Cardiac septum (tissue), 1 donor: ENCODE measurements at regions of chr20 and their contacts with region 1.

Region 1: GRCh38 chr20:49384437-49385088 is 97.9 kb downstream of the KCNB1 start:
- DNase-seq: peak; percentile 85

Region 2: GRCh38 chr20:49484180-49485140 is 99.9 kb after region 1 on chr20:
- intact Hi-C with region 1: loop called (anchors 1 kb)
- DNase-seq: no peak

Region 3: GRCh38 chr20:49508435-49509199 is 124.1 kb after region 1 on chr20:
- intact Hi-C with region 1: no loop called
- DNase-seq: no peak